GM10248 (cell line): ENCODE measurements at regions of chr3 and their contacts with region 1.

Region 1: DNA sequence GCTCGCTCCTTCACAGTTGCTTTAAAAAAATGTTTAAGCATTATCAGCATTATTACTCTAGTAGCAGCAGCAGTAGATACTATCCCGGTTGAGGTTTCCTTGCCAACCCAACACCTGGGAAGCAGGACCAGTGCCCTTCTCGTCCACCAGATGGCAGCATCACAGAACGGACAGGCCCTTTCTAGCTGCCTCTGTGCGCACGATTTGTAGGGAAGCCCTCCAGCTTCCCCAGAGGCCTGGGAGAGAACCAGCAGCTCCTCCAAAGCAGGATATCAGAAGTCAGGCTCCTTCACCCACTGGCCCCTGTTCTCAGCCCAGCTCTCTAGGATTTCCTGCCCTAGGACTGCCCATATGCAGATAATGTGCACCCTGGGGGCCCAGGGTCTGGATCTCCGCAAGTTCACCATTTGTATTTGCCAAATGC is 16.8 kb upstream of the ESYT3 start:
- DNase-seq: peak; percentile 80
- CTCF ChIP-seq: peak; percentile 91

Region 2: GRCh38 chr3:138180375-138181029 is 237.1 kb before region 1 on chr3:
- CTCF ChIA-PET with region 1: interaction called, 11 read pairs
- POLR2A ChIA-PET with region 1: no interaction called
- DNase-seq: peak; percentile 37
- CTCF ChIP-seq: peak; percentile 69

Region 3: DNA sequence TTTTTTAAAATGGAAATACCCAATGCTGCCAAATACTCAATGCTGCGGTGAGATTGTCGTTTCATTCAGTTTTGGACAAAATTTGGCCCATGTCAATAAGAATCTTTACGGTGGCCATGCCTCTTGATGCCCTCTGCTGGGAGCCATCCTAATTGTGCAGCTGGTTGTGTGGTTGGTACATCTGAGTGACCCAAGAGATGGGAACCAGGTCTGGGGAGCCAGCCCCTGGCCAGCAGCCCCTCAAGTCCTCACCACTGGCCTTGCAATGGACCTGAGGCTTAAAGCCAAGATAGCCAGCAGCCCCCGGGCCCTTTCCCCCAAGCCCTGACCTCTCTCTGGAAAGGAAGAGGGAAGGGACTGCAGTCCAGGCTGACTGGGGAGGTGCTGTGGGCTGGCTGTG is 19.6 kb before region 1 on chr3:
- CTCF ChIA-PET with region 1: interaction called, 15 read pairs
- POLR2A ChIA-PET with region 1: no interaction called
- DNase-seq: no peak
- CTCF ChIP-seq: no peak

Region 4: DNA sequence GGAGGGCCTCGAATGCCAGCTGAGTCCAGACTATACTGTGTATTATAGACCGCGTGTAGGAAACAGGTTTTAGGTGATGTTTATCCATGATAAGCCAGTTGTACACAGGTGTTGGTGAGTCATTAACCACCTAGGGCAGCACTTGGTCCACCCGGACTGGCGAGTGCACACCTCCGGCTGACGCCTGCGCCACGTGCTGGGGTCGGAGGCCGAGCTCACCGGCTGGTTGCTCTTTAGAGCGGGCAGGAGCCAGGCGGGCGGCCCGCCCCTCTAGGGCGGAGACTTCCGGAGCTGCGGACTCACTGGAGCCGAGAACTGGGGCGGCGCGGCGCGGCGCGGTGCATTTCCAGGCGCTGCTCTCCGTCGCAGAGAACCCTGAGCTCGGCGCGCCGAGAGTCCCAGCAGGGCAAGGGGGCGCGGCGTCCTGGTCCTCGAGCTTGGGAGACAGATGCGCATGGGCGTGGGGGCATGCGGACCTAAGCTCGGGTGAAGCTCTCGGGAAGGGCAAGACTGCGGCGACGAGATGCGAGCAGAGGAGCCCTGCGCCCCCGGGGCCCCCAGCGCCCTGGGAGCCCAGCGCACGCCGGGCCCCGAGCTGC is 16.8 kb after region 1 on chr3 and contains the start of gene ESYT3:
- CTCF ChIA-PET with region 1: interaction called, 17 read pairs
- POLR2A ChIA-PET with region 1: no interaction called
- DNase-seq: no peak
- CTCF ChIP-seq: no peak

Region 5: GRCh38 chr3:138459619-138460535 is 42.3 kb after region 1 on chr3:
- CTCF ChIA-PET with region 1: interaction called, 10 read pairs
- POLR2A ChIA-PET with region 1: no interaction called
- DNase-seq: no peak
- CTCF ChIP-seq: no peak